ENCODE measurements at regions of chr20 and their contacts with region 1.

Region 1: GRCh38 chr20:19692685-19693119 is 65.4 kb upstream of the RIN2 start:
- H3K4me3 Mint-ChIP-seq: no peak overlapping the region
- H3K27ac Mint-ChIP-seq: peak overlapping the region; percentile 35
- H3K4me1 Mint-ChIP-seq: peaks cover 59% of the 10 kb centered on the region
- H3K27me3 Mint-ChIP-seq: no peaks in the 10 kb centered on the region

Region 2: GRCh38 chr20:19725814-19726525 is 33.3 kb after region 1 on chr20:
- intact Hi-C with region 1: loop called (anchors 5 kb)
- H3K4me3 Mint-ChIP-seq: no peak overlapping the region
- H3K27ac Mint-ChIP-seq: peak overlapping the region; percentile 65
- H3K4me1 Mint-ChIP-seq: peaks cover 41% of the 10 kb centered on the region
- H3K27me3 Mint-ChIP-seq: no peaks in the 10 kb centered on the region

Region 3: GRCh38 chr20:19757487-19758132 is 64.9 kb after region 1 on chr20:
- intact Hi-C with region 1: loop called (anchors 2 kb)
- H3K4me3 Mint-ChIP-seq: peak overlapping the region; percentile 99
- H3K27ac Mint-ChIP-seq: peak overlapping the region; percentile 100
- H3K4me1 Mint-ChIP-seq: peaks cover 69% of the 10 kb centered on the region
- H3K27me3 Mint-ChIP-seq: peaks cover 5% of the 10 kb centered on the region

Region 4: DNA sequence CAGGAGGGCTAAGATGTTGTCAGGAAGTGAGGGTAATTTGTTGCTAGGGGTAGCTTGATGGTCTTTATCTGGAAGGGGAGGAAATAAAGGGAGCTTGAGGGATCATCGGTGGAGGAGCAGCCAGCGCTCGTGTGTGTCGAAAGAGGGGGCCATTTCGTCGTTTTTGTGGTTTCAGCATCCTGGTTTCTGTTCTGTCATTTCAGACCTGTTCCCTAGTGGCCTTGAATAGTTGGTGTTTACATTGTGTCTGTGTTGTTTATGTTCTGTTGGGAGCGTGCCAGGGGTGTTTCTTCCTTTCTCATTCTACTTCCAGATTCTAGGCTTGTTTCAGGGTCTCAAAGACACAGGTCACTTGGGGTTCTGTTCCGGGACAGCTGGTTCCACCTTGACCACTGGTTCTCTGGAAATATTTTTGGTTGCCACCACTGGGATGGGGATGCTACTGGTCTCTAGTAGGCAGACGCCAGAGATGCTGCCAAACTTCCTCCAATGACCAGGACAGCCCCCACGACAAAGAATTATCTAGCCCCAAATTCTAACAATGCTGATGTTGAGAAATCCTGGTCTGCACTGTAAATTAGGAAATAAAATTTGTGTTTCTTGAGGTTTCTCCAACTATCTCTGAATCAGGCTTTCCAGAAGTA is 210.6 kb after region 1 on chr20:
- intact Hi-C with region 1: loop called (anchors 5 kb)
- H3K4me3 Mint-ChIP-seq: no peak overlapping the region
- H3K27ac Mint-ChIP-seq: peak overlapping the region; percentile 85
- H3K4me1 Mint-ChIP-seq: peaks cover 55% of the 10 kb centered on the region
- H3K27me3 Mint-ChIP-seq: no peaks in the 10 kb centered on the region

Region 5: GRCh38 chr20:19995220-19995863 is 302.6 kb after region 1 on chr20:
- intact Hi-C with region 1: loop called (anchors 5 kb)
- H3K4me3 Mint-ChIP-seq: no peak overlapping the region
- H3K27ac Mint-ChIP-seq: peak overlapping the region; percentile 28
- H3K4me1 Mint-ChIP-seq: peaks cover 73% of the 10 kb centered on the region
- H3K27me3 Mint-ChIP-seq: no peaks in the 10 kb centered on the region